Thyroid gland (tissue), 4 donors: ENCODE measurements at regions of chr21 and their contacts with region 1.

Region 1: GRCh38 chr21:44368711-44369446 is 15.5 kb downstream of the TRPM2 start:
- DNase-seq: no peak
- H3K4me3 ChIP-seq: no peak overlapping the region
- H3K27ac ChIP-seq: no peak overlapping the region
- H3K4me1 ChIP-seq: peaks cover 3 to 4% of the 10 kb centered on the region in 2 donors
- H3K27me3 ChIP-seq: no peaks in the 10 kb centered on the region
- CTCF ChIP-seq: no peak
- POLR2A ChIP-seq: no peak

Region 2: GRCh38 chr21:44083631-44084291 is 285.1 kb before region 1 on chr21:
- intact Hi-C with region 1: no loop called
- DNase-seq: peak; percentile 22 to 28
- H3K4me3 ChIP-seq: no peak overlapping the region
- H3K27ac ChIP-seq: peak overlapping the region; percentile 68 to 88 (median 79)
- H3K4me1 ChIP-seq: peaks cover 26 to 34% of the 10 kb centered on the region in 2 donors
- H3K27me3 ChIP-seq: no peaks in the 10 kb centered on the region
- CTCF ChIP-seq: no peak
- POLR2A ChIP-seq: no peak

Region 3: GRCh38 chr21:44331650-44332307 is 37.1 kb before region 1 on chr21:
- intact Hi-C with region 1: no loop called
- DNase-seq: no peak
- H3K4me3 ChIP-seq: no peak overlapping the region
- H3K27ac ChIP-seq: no peak overlapping the region
- H3K4me1 ChIP-seq: peaks cover 5 to 6% of the 10 kb centered on the region in 2 donors
- H3K27me3 ChIP-seq: no peaks in the 10 kb centered on the region
- CTCF ChIP-seq: no peak
- POLR2A ChIP-seq: no peak

Region 4: DNA sequence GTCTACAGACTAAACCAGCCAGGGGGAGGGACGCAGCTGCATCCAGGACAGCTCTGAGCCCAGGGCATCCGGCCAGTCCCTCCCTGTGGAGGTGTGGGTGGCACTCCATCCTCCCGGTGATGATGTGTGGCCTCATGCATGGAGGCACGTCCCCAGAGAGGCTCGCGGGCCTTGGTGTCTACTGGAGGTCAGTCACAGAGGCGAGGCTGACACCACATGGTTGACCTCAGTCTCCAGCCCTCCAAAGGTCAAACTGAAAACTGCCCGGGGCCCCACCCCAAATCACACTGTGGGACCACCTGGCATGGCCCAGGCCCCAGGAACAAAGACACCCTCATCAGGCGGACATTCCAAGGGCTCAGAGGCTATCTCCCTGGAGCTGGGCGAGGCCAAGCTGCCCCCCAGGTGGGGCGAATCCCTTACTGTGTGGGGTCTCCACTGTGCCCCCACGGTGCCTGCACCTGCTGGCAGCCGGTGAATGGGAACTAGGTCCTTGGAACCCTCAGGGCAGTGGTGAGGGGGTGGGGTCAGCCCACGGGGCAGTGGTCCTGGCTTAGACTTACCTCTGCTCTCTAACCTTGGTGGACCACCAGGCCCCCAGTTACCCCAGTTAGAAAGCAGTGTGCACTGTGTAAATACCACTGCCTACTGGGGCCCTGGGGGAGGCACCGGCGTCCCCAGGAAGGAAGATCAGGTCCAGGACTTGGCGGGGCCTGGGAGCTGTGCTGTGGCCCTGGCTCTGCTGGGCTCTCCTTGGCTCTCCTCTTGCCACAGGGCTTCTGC is 33.6 kb after region 1 on chr21:
- intact Hi-C with region 1: loop called (anchors 5 kb)
- DNase-seq: no peak
- H3K4me3 ChIP-seq: no peak overlapping the region
- H3K27ac ChIP-seq: no peak overlapping the region
- H3K4me1 ChIP-seq: no peaks in the 10 kb centered on the region
- H3K27me3 ChIP-seq: no peaks in the 10 kb centered on the region
- CTCF ChIP-seq: no peak
- POLR2A ChIP-seq: no peak

Region 5: DNA sequence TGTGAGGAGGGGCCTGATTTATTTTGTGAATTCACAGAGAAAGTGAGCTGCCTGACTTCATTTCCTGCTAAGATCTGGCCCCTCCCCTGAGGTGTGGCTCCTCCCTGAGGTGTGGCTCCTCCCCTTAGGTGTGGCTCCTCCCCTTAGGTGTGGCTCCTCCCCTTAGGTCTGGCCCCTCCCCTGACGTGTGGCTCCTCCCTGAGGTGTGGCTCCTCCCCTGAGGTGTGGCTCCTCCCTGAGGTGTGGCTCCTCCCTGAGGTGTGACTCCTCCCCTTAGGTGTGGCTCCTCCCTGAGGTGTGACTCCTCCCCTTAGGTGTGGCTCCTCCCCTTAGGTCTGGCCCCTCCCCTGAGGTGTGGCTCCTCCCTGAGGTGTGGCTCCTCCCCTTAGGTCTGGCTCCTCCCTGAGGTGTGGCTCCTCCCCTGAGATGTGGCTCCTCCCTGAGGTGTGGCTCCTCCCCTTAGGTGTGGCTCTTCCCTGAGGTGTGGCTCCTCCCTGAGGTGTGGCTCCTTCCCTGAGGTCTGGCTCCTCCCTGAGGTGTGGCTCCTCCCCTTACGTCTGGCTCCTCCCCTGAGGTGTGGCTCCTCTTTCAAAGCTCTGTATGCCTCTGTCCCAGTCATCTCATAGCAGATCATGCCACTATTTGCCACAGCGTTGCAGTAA is 59.5 kb after region 1 on chr21:
- intact Hi-C with region 1: loop called (anchors 10 kb)
- DNase-seq: no peak
- H3K4me3 ChIP-seq: no peak overlapping the region
- H3K27ac ChIP-seq: no peak overlapping the region
- H3K4me1 ChIP-seq: no peaks in the 10 kb centered on the region
- H3K27me3 ChIP-seq: no peaks in the 10 kb centered on the region
- CTCF ChIP-seq: no peak
- POLR2A ChIP-seq: no peak

Region 6: DNA sequence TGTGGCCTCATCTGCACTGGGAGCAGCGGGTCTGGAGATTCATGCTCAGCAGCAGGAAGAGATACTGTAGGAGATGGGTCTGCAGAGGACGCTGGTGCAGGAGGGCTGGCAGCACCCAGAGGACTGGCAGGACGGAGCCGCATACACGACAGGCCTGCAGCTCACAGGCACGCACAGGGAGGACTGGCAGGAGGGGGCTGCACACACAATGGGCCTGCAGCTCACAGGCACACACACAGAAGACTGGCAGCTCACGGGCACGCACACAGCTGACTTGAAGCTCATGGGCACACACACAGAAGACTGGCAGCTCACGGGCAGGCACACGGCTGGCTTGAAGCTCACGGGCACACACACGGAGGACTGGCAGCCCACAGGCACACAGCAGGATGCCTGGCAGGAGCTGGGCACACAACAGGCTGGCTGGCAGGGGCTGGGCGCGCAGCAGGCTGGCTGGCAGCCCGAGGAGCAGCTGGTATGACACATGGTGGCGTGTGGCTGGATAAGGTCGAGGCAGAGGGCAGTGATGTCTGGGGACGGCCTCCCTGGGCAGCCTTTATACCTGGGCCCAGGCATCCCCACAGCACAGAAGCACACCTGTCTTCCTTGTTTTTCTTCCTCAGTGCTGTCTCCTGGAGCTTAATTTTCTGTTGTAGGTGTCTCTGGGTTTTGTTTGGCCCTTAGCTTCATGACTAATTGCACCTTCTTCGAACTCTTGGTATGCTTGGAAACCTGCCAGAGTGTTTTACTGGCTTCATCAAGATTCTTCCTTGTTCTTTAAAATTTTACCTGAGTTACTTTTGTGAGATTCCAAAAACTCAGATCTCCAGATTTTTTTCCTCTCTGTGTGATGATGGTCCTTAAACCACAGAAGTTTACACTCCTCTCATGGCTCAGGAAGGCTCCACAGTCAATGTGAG is 297.8 kb after region 1 on chr21 and contains the start of gene KRTAP12-2:
- intact Hi-C with region 1: no loop called
- DNase-seq: no peak
- H3K4me3 ChIP-seq: no peak within 1 kb of the TSS
- H3K27ac ChIP-seq: no peak within 1 kb of the TSS
- H3K4me1 ChIP-seq: no peaks in the 10 kb centered on the region
- H3K27me3 ChIP-seq: no peaks in the 10 kb centered on the region
- CTCF ChIP-seq: no peak
- POLR2A ChIP-seq: no peak
- total RNA-seq, gene KRTAP12-2: 0.89 TPM in 1 of 4 donors, not detected in the others